Naive thymus-derived CD4-positive, alpha-beta T cell (primary cell): ENCODE measurements at regions of chr15 and their contacts with region 1.

Region 1: GRCh38 chr15:92881802-92882696 is 18.1 kb upstream of the CHD2 start:
- DNase-seq: peak; percentile 95 to 100 (median 99)
- ATAC-seq: peak; percentile 93
- H3K4me3 ChIP-seq: peak overlapping the region; percentile 61
- H3K4me3 Mint-ChIP-seq: peak overlapping the region; percentile 86 to 97 (median 91)
- H3K27ac ChIP-seq: peak overlapping the region; percentile 79
- H3K27ac Mint-ChIP-seq: peak overlapping the region; percentile 97 to 100 (median 99)
- H3K4me1 ChIP-seq: peaks cover 42 to 45% of the 10 kb centered on the region in 2 donors
- H3K4me1 Mint-ChIP-seq: peaks cover 40 to 72% (median 60%) of the 10 kb centered on the region in 7 donors
- H3K27me3 ChIP-seq: no peaks in the 10 kb centered on the region
- H3K27me3 Mint-ChIP-seq: peaks cover 0 to 2% (median 0%) of the 10 kb centered on the region in 5 donors

Region 2: DNA sequence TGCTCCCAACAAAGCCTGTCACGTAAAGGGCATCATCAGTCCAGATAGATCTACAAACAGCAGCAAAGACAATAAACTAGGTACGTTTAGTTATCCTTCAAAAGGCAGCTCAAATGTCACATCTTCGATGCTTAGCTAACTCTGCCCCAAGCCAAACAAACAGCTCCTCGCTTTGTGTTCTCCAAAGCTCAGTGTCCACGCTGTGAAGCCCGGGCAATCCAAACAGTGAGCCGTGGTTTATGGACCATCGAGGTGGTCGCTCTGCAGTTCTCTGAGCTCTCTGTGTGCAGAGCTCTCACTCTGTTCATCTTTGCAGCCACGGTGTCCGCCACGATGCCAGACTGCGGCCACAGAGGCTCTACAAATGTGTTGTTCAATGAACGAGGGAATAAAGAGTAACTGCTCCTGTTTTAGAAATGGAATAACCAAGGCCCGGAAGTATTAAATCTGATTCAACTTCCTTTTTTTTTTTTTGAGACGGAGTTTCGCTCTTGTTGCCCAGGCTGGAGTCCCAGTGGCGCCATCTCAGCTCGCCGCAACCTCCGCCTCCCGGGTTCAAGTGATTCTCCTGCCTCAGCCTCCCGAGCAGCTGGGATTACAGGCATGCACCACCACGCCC is 109.3 kb before region 1 on chr15:
- CTCF ChIA-PET with region 1: no interaction called
- POLR2A ChIA-PET with region 1: no interaction called
- intact Hi-C with region 1: no loop called
- DNase-seq: no peak
- ATAC-seq: no peak
- H3K4me3 ChIP-seq: no peak overlapping the region
- H3K4me3 Mint-ChIP-seq: no peak overlapping the region
- H3K27ac ChIP-seq: no peak overlapping the region
- H3K27ac Mint-ChIP-seq: no peak overlapping the region
- H3K4me1 ChIP-seq: no peaks in the 10 kb centered on the region
- H3K4me1 Mint-ChIP-seq: no peaks in the 10 kb centered on the region
- H3K27me3 ChIP-seq: no peaks in the 10 kb centered on the region
- H3K27me3 Mint-ChIP-seq: no peaks in the 10 kb centered on the region

Region 3: GRCh38 chr15:92820236-92821021 is 61.6 kb before region 1 on chr15:
- CTCF ChIA-PET with region 1: interaction called, 39 read pairs
- POLR2A ChIA-PET with region 1: interaction called, 362 read pairs
- intact Hi-C with region 1: loop called (anchors 1 kb)
- DNase-seq: peak; percentile 74 to 90 (median 86)
- ATAC-seq: peak; percentile 95
- H3K4me3 ChIP-seq: peak overlapping the region; percentile 76
- H3K4me3 Mint-ChIP-seq: peak overlapping the region; percentile 63 to 93 (median 88)
- H3K27ac ChIP-seq: peak overlapping the region; percentile 86
- H3K27ac Mint-ChIP-seq: peak overlapping the region; percentile 78 to 98 (median 91)
- H3K4me1 ChIP-seq: peaks cover 16 to 47% of the 10 kb centered on the region in 2 donors
- H3K4me1 Mint-ChIP-seq: peaks cover 25 to 74% (median 70%) of the 10 kb centered on the region in 7 donors
- H3K27me3 ChIP-seq: no peaks in the 10 kb centered on the region
- H3K27me3 Mint-ChIP-seq: no peaks in the 10 kb centered on the region

Region 4: GRCh38 chr15:92845126-92845508 is 36.9 kb before region 1 on chr15:
- CTCF ChIA-PET with region 1: interaction called, 11 read pairs
- POLR2A ChIA-PET with region 1: interaction called, 550 read pairs
- intact Hi-C with region 1: loop called (anchors 1 kb)
- DNase-seq: peak in 7 of 9 donors; percentile 66 to 83 (median 73)
- ATAC-seq: peak; percentile 66
- H3K4me3 ChIP-seq: peak overlapping the region; percentile 11
- H3K4me3 Mint-ChIP-seq: peak overlapping the region; percentile 56 to 95 (median 82)
- H3K27ac ChIP-seq: peak overlapping the region; percentile 72
- H3K27ac Mint-ChIP-seq: peak overlapping the region; percentile 93 to 99 (median 97)
- H3K4me1 ChIP-seq: peaks cover 21 to 78% of the 10 kb centered on the region in 2 donors
- H3K4me1 Mint-ChIP-seq: peaks cover 41 to 91% (median 81%) of the 10 kb centered on the region in 7 donors
- H3K27me3 ChIP-seq: no peaks in the 10 kb centered on the region
- H3K27me3 Mint-ChIP-seq: no peaks in the 10 kb centered on the region

Region 5: GRCh38 chr15:92868992-92869988 is 12.8 kb before region 1 on chr15:
- CTCF ChIA-PET with region 1: no interaction called
- POLR2A ChIA-PET with region 1: interaction called, 93 read pairs
- intact Hi-C with region 1: no loop called
- DNase-seq: no peak
- ATAC-seq: no peak
- H3K4me3 ChIP-seq: no peak overlapping the region
- H3K4me3 Mint-ChIP-seq: no peak overlapping the region
- H3K27ac ChIP-seq: no peak overlapping the region
- H3K27ac Mint-ChIP-seq: peak overlapping the region in 4 of 9 donors; percentile 22 to 76 (median 26)
- H3K4me1 ChIP-seq: no peaks in the 10 kb centered on the region
- H3K4me1 Mint-ChIP-seq: peaks cover 6 to 13% (median 7%) of the 10 kb centered on the region in 7 donors
- H3K27me3 ChIP-seq: no peaks in the 10 kb centered on the region
- H3K27me3 Mint-ChIP-seq: peaks cover 0 to 8% (median 0%) of the 10 kb centered on the region in 5 donors

Region 6: GRCh38 chr15:92924216-92924615 is 42.2 kb after region 1 on chr15:
- CTCF ChIA-PET with region 1: interaction called, 3 read pairs
- POLR2A ChIA-PET with region 1: interaction called, 216 read pairs
- intact Hi-C with region 1: no loop called
- DNase-seq: no peak
- ATAC-seq: no peak
- H3K4me3 ChIP-seq: no peak overlapping the region
- H3K4me3 Mint-ChIP-seq: peak overlapping the region in 8 of 10 donors; percentile 2 to 72 (median 44)
- H3K27ac ChIP-seq: no peak overlapping the region
- H3K27ac Mint-ChIP-seq: peak overlapping the region; percentile 29 to 95 (median 71)
- H3K4me1 ChIP-seq: peaks cover 35 to 39% of the 10 kb centered on the region in 2 donors
- H3K4me1 Mint-ChIP-seq: peaks cover 46 to 97% (median 90%) of the 10 kb centered on the region in 7 donors
- H3K27me3 ChIP-seq: no peaks in the 10 kb centered on the region
- H3K27me3 Mint-ChIP-seq: no peaks in the 10 kb centered on the region

Region 7: DNA sequence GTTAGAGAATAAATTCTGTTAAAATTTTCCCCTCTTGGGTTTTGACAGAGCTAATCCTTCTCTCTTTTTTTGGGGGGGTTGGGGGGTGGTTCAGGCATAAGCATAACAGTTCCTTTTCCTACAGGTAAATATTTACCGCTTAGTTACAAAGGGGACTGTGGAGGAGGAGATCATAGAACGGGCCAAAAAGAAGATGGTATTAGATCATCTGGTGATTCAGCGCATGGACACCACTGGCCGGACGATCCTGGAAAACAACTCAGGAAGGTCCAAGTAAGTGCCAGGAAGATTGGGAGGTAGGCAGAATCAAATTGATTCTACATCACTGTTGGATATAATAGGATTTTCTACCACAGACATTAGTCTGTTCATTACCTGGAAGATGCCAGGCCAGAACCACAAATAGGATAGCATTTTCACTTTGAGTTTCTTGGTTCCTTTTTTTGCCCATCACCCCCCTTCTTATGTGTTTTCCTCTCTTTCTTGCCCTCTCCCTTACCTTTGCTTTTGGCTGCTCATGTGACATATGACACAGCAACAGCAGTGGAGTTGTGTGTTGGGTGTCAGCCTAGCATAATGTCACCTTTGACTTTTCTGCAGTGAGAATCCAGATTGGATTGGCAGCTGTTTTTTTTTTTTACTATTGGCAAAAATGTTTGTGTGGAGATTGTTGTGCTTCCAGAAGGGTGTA is 97.1 kb after region 1 on chr15:
- CTCF ChIA-PET with region 1: no interaction called
- POLR2A ChIA-PET with region 1: no interaction called
- intact Hi-C with region 1: no loop called
- DNase-seq: no peak
- ATAC-seq: no peak
- H3K4me3 ChIP-seq: no peak overlapping the region
- H3K4me3 Mint-ChIP-seq: peak overlapping the region in 1 of 10 donors; percentile 51
- H3K27ac ChIP-seq: no peak overlapping the region
- H3K27ac Mint-ChIP-seq: peak overlapping the region in 7 of 9 donors; percentile 38 to 58 (median 54)
- H3K4me1 ChIP-seq: no peaks in the 10 kb centered on the region
- H3K4me1 Mint-ChIP-seq: peaks cover 11 to 35% (median 14%) of the 10 kb centered on the region in 7 donors
- H3K27me3 ChIP-seq: no peaks in the 10 kb centered on the region
- H3K27me3 Mint-ChIP-seq: no peaks in the 10 kb centered on the region

Region 8: DNA sequence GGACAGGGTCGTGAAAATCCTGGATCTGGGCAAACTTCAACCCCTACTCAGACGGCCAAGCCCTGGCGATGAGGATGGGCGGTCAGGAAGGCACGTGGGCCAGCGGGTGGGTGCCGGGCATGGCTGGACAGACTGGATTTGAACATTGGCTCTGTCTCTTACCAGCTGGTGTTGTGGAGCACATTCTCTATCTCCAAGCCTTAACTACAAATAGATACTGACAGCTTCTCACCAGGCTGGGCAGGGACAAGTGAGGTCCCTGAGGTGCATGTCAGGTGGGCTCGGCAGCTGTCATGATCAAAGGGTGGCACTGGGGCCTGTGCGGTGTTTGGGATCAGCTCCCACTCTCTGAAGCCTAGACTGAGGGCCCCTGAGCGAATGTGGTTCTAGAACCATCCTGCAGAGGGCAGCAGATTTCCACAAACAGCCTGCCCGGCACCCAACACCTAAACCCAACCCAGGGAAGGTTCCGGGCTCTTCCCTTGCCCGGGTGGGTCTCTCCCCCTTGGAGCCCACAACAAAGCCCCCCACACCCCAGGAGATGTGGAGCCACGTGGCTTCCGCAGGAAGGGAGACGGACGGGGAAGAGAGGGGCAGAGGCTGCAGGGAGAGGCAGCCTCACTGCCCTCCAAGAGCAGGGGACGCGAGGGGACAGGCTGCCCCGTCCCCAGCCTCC is 148.5 kb after region 1 on chr15:
- CTCF ChIA-PET with region 1: no interaction called
- POLR2A ChIA-PET with region 1: no interaction called
- intact Hi-C with region 1: no loop called
- DNase-seq: peak; percentile 38 to 69 (median 59)
- ATAC-seq: peak; percentile 85
- H3K4me3 ChIP-seq: no peak overlapping the region
- H3K4me3 Mint-ChIP-seq: peak overlapping the region in 1 of 10 donors; percentile 12
- H3K27ac ChIP-seq: no peak overlapping the region
- H3K27ac Mint-ChIP-seq: peak overlapping the region in 6 of 9 donors; percentile 69 to 82 (median 74)
- H3K4me1 ChIP-seq: peaks cover 0 to 11% of the 10 kb centered on the region in 2 donors
- H3K4me1 Mint-ChIP-seq: peaks cover 6 to 33% (median 20%) of the 10 kb centered on the region in 7 donors
- H3K27me3 ChIP-seq: no peaks in the 10 kb centered on the region
- H3K27me3 Mint-ChIP-seq: no peaks in the 10 kb centered on the region